ENCODE measurements at regions of chr19 and their contacts with region 1.

Region 1: GRCh38 chr19:4139614-4140236 is 13.7 kb upstream of the CREB3L3 start:
- DNase-seq: peak; percentile 93
- ATAC-seq: peak; percentile 95
- H3K4me3 Mint-ChIP-seq: peak overlapping the region; percentile 3
- H3K27ac Mint-ChIP-seq: no peak overlapping the region
- H3K4me1 Mint-ChIP-seq: peaks cover 11% of the 10 kb centered on the region
- H3K27me3 Mint-ChIP-seq: peaks cover 2% of the 10 kb centered on the region
- CTCF ChIP-seq: peak; percentile 56

Region 2: GRCh38 chr19:4007021-4007835 is 132.5 kb before region 1 on chr19 and contains the start of gene PIAS4:
- CTCF ChIA-PET with region 1: interaction called, 12 read pairs
- POLR2A ChIA-PET with region 1: interaction called, 5 read pairs
- intact Hi-C with region 1: no loop called
- DNase-seq: peak; percentile 97
- ATAC-seq: peak; percentile 95
- H3K4me3 Mint-ChIP-seq: peak within 1 kb of the TSS; percentile 81
- H3K27ac Mint-ChIP-seq: peak within 1 kb of the TSS; percentile 78
- H3K4me1 Mint-ChIP-seq: peaks cover 30% of the 10 kb centered on the region
- H3K27me3 Mint-ChIP-seq: no peaks in the 10 kb centered on the region
- CTCF ChIP-seq: no peak
- total RNA-seq, gene PIAS4: 22.2 TPM

Region 3: DNA sequence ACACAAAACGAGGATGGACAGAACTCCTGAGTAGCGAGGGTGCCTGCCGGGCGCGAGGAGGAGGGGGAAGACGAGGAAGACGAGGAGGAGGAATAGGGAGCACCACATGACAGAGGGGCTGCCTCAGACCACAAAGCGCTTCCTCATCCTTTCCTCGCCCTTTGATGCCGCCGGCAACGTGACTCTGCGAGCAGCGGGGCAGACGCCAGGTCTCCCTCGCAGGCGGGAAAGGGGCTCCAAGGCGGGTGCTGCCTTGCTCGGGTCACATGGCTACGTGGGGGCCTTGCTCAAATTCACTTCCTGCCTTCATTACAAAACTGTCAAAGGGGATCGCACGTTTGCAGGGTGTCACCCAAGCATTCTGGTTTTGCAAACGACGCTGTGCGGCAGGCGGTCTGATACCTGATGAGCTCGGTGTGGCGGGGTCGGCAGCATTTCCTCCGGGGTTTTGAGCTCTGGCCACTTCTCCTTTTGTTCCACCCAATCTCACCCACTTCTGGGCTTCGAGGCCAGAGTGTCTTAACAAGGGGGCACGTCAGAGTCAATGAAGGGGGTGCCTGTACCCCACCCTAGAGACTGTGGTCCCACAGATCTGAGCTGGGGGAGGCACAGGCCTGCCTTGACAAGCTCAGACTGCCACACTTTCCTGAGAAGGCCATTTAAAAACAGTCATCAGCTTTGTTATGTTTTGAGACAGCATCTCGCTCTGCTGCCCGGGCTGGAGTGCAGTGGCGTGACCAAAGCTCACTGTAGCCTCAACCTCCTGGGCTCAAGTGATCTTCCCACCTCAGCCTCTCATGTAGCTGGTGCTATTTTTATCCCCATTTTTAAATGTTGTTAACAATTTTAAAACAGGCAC is 30.7 kb before region 1 on chr19:
- CTCF ChIA-PET with region 1: interaction called, 14 read pairs
- POLR2A ChIA-PET with region 1: no interaction called
- intact Hi-C with region 1: no loop called
- DNase-seq: peak; percentile 88
- ATAC-seq: peak; percentile 61
- H3K4me3 Mint-ChIP-seq: peak overlapping the region; percentile 57
- H3K27ac Mint-ChIP-seq: peak overlapping the region; percentile 94
- H3K4me1 Mint-ChIP-seq: peaks cover 59% of the 10 kb centered on the region
- H3K27me3 Mint-ChIP-seq: no peaks in the 10 kb centered on the region
- CTCF ChIP-seq: no peak

Region 4: GRCh38 chr19:4123615-4124568 is 15.8 kb before region 1 on chr19 and contains the start of gene MAP2K2:
- CTCF ChIA-PET with region 1: interaction called, 17 read pairs
- POLR2A ChIA-PET with region 1: interaction called, 3 read pairs
- intact Hi-C with region 1: no loop called
- DNase-seq: peak; percentile 95
- ATAC-seq: peak; percentile 96
- H3K4me3 Mint-ChIP-seq: peak within 1 kb of the TSS; percentile 87
- H3K27ac Mint-ChIP-seq: peak within 1 kb of the TSS; percentile 90
- H3K4me1 Mint-ChIP-seq: peaks cover 15% of the 10 kb centered on the region
- H3K27me3 Mint-ChIP-seq: no peaks in the 10 kb centered on the region
- CTCF ChIP-seq: no peak
- total RNA-seq, gene MAP2K2: 141 to 145 TPM

Region 5: DNA sequence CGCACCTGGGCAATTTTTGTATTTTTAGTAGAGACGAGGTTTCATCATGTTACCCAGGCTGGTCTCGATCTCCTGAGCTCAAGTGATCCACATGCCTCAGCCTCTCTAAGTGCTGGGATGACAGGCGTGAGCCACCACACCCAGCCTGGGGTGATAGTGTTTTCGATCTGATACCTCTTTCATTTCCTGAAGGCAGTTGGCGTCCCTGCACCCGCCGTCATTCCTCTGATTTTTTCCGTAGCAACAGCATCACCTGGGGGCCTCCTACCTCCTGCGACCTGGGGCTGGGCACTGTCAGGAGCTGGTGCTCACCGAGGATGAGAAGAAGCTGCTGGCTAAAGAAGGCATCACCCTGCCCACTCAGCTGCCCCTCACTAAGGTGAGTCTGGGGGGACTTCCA is 24.5 kb after region 1 on chr19:
- CTCF ChIA-PET with region 1: interaction called, 19 read pairs
- POLR2A ChIA-PET with region 1: no interaction called
- intact Hi-C with region 1: no loop called
- DNase-seq: no peak
- ATAC-seq: no peak
- H3K4me3 Mint-ChIP-seq: no peak overlapping the region
- H3K27ac Mint-ChIP-seq: no peak overlapping the region
- H3K4me1 Mint-ChIP-seq: no peaks in the 10 kb centered on the region
- H3K27me3 Mint-ChIP-seq: peaks cover 8% of the 10 kb centered on the region
- CTCF ChIP-seq: no peak

Region 6: DNA sequence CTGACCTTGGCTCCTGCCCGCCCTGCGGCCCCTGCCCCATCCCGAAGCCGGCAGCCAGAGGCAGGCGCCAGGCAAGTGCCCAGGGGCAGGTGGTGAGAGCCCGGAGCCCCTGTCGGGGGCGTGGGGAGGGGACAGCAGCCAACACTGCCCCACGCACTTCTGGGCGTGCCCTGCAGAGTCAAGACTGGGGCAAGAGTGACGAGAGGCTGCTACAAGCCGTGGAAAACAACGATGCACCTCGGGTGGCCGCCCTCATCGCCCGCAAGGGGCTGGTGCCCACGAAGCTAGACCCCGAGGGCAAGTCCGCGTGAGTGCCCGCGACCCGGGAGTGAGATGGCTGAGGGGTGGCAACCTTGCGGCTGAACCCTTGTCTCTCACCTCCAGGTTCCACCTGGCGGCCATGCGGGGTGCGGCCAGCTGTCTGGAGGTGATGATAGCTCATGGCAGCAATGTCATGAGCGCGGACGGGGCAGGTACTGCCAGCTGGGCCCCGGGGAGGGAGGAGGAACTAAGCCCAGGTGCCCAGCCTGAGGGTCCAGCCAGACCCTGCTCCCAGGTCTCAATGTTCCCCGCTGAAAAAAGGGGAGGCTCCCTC is 60.1 kb after region 1 on chr19:
- CTCF ChIA-PET with region 1: interaction called, 26 read pairs
- POLR2A ChIA-PET with region 1: no interaction called
- intact Hi-C with region 1: no loop called
- DNase-seq: no peak
- ATAC-seq: no peak
- H3K4me3 Mint-ChIP-seq: no peak overlapping the region
- H3K27ac Mint-ChIP-seq: no peak overlapping the region
- H3K4me1 Mint-ChIP-seq: peaks cover 12% of the 10 kb centered on the region
- H3K27me3 Mint-ChIP-seq: peaks cover 36% of the 10 kb centered on the region
- CTCF ChIP-seq: no peak

Measured in activated CD8-positive, alpha-beta T cell treated with anti-CD3 and anti-CD28 coated beads for 36 hours (primary cell).